ENCODE measurements at regions of chr7 and their contacts with region 1.

Region 1: GRCh38 chr7:48424731-48425130 is 253.5 kb downstream of the ABCA13 start:
- DNase-seq: no peak
- ATAC-seq: peak; percentile 31

Region 2: DNA sequence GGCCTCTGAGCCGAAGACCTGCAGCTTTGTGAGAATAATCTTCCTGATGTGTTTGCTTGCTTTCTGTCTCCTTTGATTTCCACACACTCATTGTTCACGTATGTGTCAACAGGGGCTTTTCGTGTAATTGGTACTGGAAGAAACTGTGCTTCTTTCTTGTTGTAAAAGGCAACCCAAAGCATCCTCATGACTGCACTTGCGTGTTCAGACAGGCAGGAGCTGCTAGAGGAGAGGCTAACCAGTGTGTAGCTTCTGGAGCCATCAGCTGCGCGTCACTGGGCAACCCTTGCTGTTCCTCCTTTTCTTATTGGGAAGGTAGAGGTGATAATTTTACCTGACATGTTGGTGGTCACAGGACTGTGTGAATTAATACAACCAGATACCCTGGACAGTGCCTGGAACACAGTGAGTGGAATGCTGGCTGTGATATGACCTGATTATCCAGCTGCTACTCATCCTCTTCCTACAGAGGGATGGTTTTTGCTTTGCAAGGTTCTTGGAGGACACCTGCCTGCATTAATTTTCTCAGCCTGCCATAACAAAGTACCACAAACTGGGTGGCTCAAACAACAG is 40.5 kb before region 1 on chr7:
- intact Hi-C with region 1: no loop called
- DNase-seq: no peak
- ATAC-seq: no peak

Region 3: GRCh38 chr7:48875045-48875916 is 450.6 kb after region 1 on chr7:
- intact Hi-C with region 1: loop called (anchors 10 kb)
- DNase-seq: peak; percentile 67
- ATAC-seq: peak; percentile 75